Left cardiac atrium (tissue), 4 donors: ENCODE measurements at regions of chr13 and their contacts with region 1.

Region 1: DNA sequence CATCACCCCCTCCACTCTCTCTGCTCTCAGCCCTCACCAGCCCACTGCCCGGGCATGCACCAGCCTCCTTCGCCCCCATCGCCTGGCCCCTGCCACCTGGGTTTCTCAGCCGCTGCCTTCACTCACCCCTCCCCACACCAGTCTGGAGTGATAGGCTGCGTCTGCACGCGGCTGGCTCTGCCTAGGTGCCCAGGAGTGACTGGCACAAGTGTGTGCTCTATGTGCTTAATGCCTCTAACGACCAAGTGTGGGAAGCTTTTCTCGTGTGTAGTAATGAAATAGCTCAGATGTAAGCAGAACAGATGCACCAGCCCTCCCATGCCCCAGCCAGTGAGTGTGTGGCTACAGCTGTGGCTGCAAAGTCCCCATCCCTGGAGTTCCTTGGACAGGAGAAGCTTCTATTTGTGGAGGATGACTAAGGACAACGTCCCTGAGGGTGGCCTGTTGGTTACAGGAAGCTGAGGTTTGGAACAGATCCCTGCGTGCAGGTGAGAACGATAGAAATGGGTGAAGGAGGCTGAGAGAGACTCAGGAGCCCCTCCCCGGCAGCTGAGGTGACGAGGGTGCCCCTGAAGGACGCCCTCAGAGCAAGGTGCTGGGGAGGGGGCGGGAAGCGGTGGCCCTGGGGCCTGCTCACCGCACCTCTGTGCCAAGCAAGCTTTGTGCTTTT is 35.6 kb downstream of the ATP11A start:
- DNase-seq: no peak
- ATAC-seq: peak in 1 of 2 donors; percentile 14

Region 2: GRCh38 chr13:112161521-112162301 is 563.8 kb before region 1 on chr13:
- intact Hi-C with region 1: no loop called
- DNase-seq: no peak
- ATAC-seq: no peak

Region 3: DNA sequence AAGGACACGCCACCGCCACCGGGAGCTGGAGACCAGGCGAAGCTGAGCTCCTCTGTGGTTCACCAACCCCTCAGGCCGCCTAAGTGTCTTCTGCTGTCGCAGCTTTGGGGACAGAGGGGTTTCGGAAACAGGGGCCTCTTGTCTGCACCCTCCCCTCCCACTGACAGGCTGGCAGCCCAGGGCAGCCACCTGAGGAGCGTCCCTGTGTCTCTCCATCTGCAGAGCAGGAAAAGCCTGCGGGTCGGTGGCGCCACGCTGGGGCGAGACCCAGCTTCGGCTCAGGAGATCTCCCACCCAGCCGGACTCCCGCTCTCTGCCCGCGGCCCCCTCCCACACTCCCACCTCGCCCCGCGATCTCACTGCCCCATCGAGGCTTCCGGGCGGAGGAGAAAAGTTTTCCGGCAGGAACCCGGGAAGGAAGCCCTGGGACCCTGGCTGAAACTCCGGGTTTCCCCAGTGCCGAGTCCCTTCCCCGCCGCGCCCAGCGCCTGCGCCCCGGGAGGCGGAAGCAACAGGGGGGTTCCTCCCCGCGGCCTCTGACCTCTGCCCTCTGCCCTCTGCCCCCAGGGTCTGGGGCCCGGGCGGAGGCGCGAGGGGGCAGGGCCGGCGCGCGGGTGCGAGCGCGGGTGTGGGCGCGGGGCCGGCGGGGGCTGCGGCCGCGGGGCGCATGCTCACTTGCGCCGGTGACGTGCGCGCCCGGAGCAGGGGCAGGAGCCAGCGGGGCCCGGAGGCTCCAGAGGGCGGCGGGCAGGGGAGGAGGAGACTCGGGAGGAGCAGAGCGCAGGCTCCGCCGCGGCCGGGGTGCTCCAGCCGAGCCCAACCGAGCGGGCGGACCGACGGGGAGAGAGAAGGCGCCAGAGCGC is 35.9 kb before region 1 on chr13 and contains the start of gene ATP11A:
- intact Hi-C with region 1: loop called in 1 of 2 experiments (anchors 5 kb)
- DNase-seq: peak; percentile 95
- ATAC-seq: peak; percentile 92 to 95
- total RNA-seq, gene ATP11A: 58.5 to 69.9 TPM

Region 4: DNA sequence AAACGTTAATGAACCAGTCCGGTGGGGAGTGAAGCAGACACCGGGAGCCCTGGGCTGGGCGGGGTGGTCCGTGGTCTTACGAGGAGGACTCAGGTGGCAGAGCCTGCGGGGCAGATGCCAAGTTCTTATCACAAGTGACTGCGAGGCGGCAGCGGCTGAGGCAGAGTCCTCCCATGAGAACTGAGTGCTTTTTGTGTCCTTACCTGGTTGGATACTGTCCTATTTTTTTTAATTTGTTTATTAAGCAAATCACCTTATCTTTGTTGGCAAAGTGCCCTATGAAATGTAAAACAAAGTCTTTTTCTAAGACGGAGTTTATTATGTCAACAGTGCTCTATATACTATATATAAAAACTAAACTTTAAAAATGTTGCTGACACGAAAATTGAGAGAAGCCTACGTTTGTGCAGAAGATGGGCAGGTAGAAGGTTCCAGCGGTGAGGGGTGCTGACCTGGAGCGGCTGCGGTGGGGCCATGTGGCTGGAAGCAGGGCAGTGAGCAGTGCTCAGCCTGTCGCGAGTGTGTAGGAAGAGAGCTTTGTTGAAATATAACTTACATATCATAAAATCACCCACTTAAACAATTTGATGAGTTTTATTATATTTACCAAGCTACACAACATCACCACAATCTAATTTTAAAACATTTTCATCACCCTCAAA is 46.5 kb after region 1 on chr13:
- intact Hi-C with region 1: loop called in 1 of 2 experiments (anchors 2 kb)
- DNase-seq: peak; percentile 11
- ATAC-seq: no peak